ENCODE measurements at regions of chr5 and their contacts with region 1.

Region 1: GRCh38 chr5:93899026-93899600 is 157.7 kb upstream of the POU5F2 start:
- DNase-seq: peak; percentile 11
- H3K4me3 ChIP-seq: no peak overlapping the region
- H3K27ac ChIP-seq: no peak overlapping the region
- H3K4me1 ChIP-seq: peaks cover 0 to 4% of the 10 kb centered on the region in 2 experiments; a peak in 2 of 4 replicates
- H3K27me3 ChIP-seq: no peaks in the 10 kb centered on the region
- CTCF ChIP-seq: peak; percentile 65
- EP300 ChIP-seq: no peak; a peak in 1 of 4 replicates
- RAD21 ChIP-seq: peak; percentile 44

Region 2: GRCh38 chr5:93909356-93909755 is 10.2 kb after region 1 on chr5:
- CTCF ChIA-PET with region 1: interaction called, 17 read pairs
- POLR2A ChIA-PET with region 1: no interaction called
- DNase-seq: peak; percentile 1
- H3K4me3 ChIP-seq: no peak overlapping the region
- H3K27ac ChIP-seq: no peak overlapping the region
- H3K4me1 ChIP-seq: no peaks in the 10 kb centered on the region; a peak in 1 of 4 replicates
- H3K27me3 ChIP-seq: no peaks in the 10 kb centered on the region
- CTCF ChIP-seq: peak; percentile 60
- EP300 ChIP-seq: no peak
- RAD21 ChIP-seq: peak; percentile 49

Region 3: GRCh38 chr5:93964421-93964820 is 65.3 kb after region 1 on chr5:
- CTCF ChIA-PET with region 1: no interaction called
- POLR2A ChIA-PET with region 1: no interaction called
- DNase-seq: no peak
- H3K4me3 ChIP-seq: no peak overlapping the region
- H3K27ac ChIP-seq: no peak overlapping the region
- H3K4me1 ChIP-seq: no peaks in the 10 kb centered on the region; a peak in 1 of 4 replicates
- H3K27me3 ChIP-seq: no peaks in the 10 kb centered on the region
- CTCF ChIP-seq: no peak
- EP300 ChIP-seq: no peak
- RAD21 ChIP-seq: no peak

Measured in SK-N-SH (cell line).